ENCODE measurements at regions of chr18 and their contacts with region 1.

Region 1: GRCh38 chr18:11040823-11041656 is 108.3 kb downstream of the PIEZO2 start:
- DNase-seq: no peak
- H3K4me3 ChIP-seq: no peak overlapping the region
- H3K27me3 ChIP-seq: no peaks in the 10 kb centered on the region; the same call in 1 of the 2 replicates
- CTCF ChIP-seq: peak; percentile 75

Region 2: GRCh38 chr18:10851824-10852319 is 189.2 kb before region 1 on chr18:
- CTCF ChIA-PET with region 1: interaction called, 44 read pairs
- POLR2A ChIA-PET with region 1: no interaction called
- DNase-seq: no peak
- H3K4me3 ChIP-seq: no peak overlapping the region
- H3K27me3 ChIP-seq: peaks cover 10% of the 10 kb centered on the region; the same call in 1 of the 2 replicates
- CTCF ChIP-seq: peak; percentile 68

Region 3: DNA sequence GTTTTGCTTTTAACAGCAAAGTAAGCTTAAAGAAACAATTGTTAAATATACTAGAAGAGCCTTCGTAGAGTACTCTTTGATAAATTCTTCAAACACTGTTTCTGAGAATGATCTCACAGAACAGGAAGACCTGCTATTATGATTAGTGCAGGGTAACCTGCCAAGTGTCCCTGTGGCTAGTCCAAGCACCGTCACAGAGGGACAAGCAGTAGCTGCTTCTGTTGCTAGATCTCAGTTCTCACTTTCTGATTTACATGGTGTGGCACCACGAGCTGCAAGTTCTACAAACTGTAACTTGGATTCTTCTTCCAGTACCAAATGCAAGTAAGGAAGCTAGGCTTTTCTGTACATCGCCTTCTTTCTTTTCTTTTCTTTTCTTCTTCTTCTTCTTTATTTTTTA is 13.2 kb before region 1 on chr18:
- CTCF ChIA-PET with region 1: interaction called, 28 read pairs
- POLR2A ChIA-PET with region 1: no interaction called
- DNase-seq: no peak
- H3K4me3 ChIP-seq: no peak overlapping the region
- H3K27me3 ChIP-seq: peaks cover 2% of the 10 kb centered on the region
- CTCF ChIP-seq: no peak

Region 4: GRCh38 chr18:11149441-11150270 is 108.6 kb after region 1 on chr18 and contains the start of gene PIEZO2:
- CTCF ChIA-PET with region 1: interaction called, 10 read pairs
- POLR2A ChIA-PET with region 1: no interaction called
- DNase-seq: no peak
- H3K4me3 ChIP-seq: peak within 1 kb of the TSS; percentile 41
- H3K27me3 ChIP-seq: peaks cover 33% of the 10 kb centered on the region
- CTCF ChIP-seq: no peak
- polyA plus RNA-seq, gene PIEZO2: 4.3 and 4.6 TPM in 2 replicates

Region 5: DNA sequence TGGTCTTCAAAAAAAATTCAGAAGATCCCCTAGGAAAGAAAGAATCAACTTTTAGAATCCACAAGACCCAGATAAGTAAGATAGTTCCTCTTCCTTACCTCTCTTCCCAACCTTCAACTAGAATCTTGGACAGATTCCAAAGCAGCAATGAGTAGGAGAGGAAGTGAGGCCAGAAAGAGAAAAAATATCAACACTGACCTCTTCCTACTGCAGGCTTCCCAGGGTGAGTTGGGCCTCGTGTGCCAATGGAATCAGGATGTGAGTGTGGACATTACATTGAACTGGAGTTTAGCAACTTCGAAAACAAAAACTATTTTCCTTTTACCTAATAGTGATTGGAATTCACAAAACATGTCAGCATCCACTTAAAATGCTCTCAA is 210.8 kb after region 1 on chr18:
- CTCF ChIA-PET with region 1: no interaction called
- POLR2A ChIA-PET with region 1: no interaction called
- DNase-seq: no peak
- H3K4me3 ChIP-seq: no peak overlapping the region
- H3K27me3 ChIP-seq: no peaks in the 10 kb centered on the region
- CTCF ChIP-seq: no peak

Region 6: DNA sequence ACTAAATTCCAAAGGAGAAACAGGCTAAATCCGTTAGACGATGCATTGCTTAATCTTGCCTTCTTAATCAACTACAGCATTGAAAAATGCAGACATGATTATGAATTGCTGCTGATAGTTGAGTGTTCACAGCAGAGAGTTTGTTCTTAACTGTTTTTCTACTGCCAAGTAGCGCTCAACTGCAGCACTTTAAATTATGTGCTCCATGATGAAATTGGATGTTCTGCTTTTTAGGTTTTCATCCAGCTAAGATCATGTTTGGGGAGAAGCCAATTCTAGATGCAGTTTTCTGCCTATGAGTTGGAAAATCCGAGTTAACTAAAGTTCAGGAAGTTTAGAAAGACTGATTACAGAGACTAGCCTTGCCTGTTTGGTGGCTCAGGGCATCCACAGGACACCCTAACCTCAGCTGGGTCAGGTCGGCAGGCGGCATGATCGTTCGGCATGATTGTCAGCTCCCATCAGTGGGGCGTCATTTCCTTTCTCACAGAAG is 227.7 kb after region 1 on chr18:
- CTCF ChIA-PET with region 1: no interaction called
- POLR2A ChIA-PET with region 1: no interaction called
- DNase-seq: peak; percentile 24
- H3K4me3 ChIP-seq: no peak overlapping the region
- H3K27me3 ChIP-seq: no peaks in the 10 kb centered on the region
- CTCF ChIP-seq: no peak

Region 7: GRCh38 chr18:11293794-11294193 is 252.8 kb after region 1 on chr18:
- CTCF ChIA-PET with region 1: no interaction called
- POLR2A ChIA-PET with region 1: interaction called, 14 read pairs
- DNase-seq: no peak
- H3K4me3 ChIP-seq: no peak overlapping the region
- H3K27me3 ChIP-seq: peaks cover 1% of the 10 kb centered on the region; the same call in 1 of the 2 replicates
- CTCF ChIP-seq: no peak

Region 8: DNA sequence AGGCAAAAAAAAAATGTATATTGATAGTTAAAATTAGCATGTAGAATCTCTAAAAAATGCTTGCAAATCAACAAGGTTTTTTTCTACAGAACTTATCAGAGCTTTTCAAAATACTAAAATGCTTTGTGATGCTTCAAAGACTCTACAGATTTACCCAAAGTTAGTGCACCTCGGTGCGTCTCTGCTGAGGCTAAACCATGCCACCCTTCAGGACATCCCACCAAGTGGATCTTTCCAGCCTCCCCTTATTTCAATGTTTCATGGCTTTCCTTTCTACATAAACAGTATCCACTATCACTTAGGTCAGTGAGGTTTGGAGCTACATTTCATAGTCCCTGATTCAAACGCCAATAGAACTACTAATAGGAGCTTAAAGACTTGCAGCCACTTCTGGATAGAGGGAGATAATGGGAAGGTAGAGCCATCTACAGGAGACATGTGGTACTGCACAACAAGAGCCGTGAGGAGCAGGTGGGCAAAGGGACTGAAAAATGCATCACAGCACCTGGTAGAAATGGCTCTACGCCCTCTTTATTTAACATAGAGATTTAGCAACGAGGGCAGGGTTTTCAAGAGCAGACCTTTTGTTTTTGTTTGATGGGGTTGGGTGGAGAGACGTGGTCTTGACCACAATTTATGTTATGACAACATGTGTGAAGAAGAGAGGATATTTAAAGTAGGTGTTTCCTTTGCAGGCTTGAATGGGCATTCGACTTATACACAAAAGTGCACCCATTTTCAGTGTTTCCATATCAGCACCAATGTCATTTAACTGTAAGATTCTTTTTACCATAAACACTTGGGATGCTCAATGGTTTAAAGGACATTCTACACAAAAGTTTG is 512.3 kb after region 1 on chr18:
- CTCF ChIA-PET with region 1: interaction called, 16 read pairs
- POLR2A ChIA-PET with region 1: no interaction called
- DNase-seq: no peak
- H3K4me3 ChIP-seq: no peak overlapping the region
- H3K27me3 ChIP-seq: no peaks in the 10 kb centered on the region; the same call in 1 of the 2 replicates
- CTCF ChIP-seq: peak; percentile 92